H1 (cell line): ENCODE measurements at regions of chr1 and their contacts with region 1.

Region 1: GRCh38 chr1:60989749-60990713 is 92.3 kb upstream of the NFIA start:
- DNase-seq: no peak
- H3K4me3 ChIP-seq: no peak overlapping the region
- H3K27ac ChIP-seq: no peak overlapping the region
- H3K4me1 ChIP-seq: peaks cover 0 to 3% (median 0%) of the 10 kb centered on the region in 4 experiments; a peak in 1 of 7 replicates
- H3K27me3 ChIP-seq: no peaks in the 10 kb centered on the region
- CTCF ChIP-seq: no peak
- EP300 ChIP-seq: no peak
- POLR2A ChIP-seq: no peak
- RAD21 ChIP-seq: no peak

Region 2: GRCh38 chr1:60978421-60979357 is 11.3 kb before region 1 on chr1:
- CTCF ChIA-PET with region 1: interaction called, 39 read pairs
- POLR2A ChIA-PET with region 1: interaction called, 3 read pairs
- DNase-seq: peak in 1 of 2 experiments; percentile 55
- H3K4me3 ChIP-seq: no peak overlapping the region
- H3K27ac ChIP-seq: no peak overlapping the region
- H3K4me1 ChIP-seq: peaks cover 0 to 4% (median 2%) of the 10 kb centered on the region in 4 experiments; a peak in 1 of 7 replicates
- H3K27me3 ChIP-seq: no peaks in the 10 kb centered on the region
- CTCF ChIP-seq: peak; percentile 64 to 75 (median 69)
- EP300 ChIP-seq: no peak
- POLR2A ChIP-seq: no peak
- RAD21 ChIP-seq: peak; percentile 71 to 74

Region 3: GRCh38 chr1:61097317-61097716 is 107.3 kb after region 1 on chr1:
- CTCF ChIA-PET with region 1: no interaction called
- POLR2A ChIA-PET with region 1: no interaction called
- DNase-seq: no peak
- H3K4me3 ChIP-seq: no peak overlapping the region
- H3K27ac ChIP-seq: no peak overlapping the region
- H3K4me1 ChIP-seq: no peaks in the 10 kb centered on the region
- H3K27me3 ChIP-seq: no peaks in the 10 kb centered on the region
- CTCF ChIP-seq: no peak
- EP300 ChIP-seq: no peak
- POLR2A ChIP-seq: no peak
- RAD21 ChIP-seq: no peak

Region 4: DNA sequence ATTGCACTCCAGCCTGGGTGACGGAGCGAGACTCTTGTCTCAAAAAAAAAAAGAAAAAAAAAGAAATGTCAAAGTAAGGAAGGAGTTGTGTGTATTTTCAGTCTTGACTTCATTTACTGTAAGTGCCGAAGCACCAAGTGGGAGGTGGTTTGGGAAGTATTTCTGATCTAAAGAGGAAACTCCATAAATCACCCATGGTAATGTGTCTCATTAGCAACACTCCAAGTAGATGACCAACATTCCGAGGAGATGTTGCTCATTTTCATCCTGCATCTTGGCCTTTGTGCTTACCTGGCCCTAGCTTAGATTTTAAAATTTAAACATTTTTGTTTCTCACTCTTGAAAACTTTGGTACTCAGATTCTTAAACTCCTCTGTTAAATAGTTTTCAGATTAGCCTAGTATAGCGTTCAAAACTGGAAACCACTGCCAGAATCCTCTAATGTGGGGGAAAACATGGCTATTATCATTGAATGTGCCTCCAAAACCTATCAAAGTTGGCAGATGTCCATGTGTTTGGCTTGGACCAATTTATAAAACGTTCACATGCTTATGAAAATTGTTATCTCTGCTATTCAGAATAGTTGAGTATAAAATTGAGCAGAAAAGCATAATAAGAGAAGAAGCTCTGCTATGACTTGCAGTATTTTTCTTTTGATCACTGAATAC is 202.8 kb after region 1 on chr1:
- CTCF ChIA-PET with region 1: no interaction called
- POLR2A ChIA-PET with region 1: no interaction called
- DNase-seq: no peak
- H3K4me3 ChIP-seq: no peak overlapping the region
- H3K27ac ChIP-seq: no peak overlapping the region
- H3K4me1 ChIP-seq: 0 out of 7 replicates have a peak, but pooled peaks cover 0 to 2% (median 0%) of the 10 kb centered on the region in 4 experiments
- H3K27me3 ChIP-seq: no peaks in the 10 kb centered on the region
- CTCF ChIP-seq: no peak
- EP300 ChIP-seq: no peak
- POLR2A ChIP-seq: no peak
- RAD21 ChIP-seq: no peak